ENCODE measurements at regions of chr3 and their contacts with region 1.

Region 1: GRCh38 chr3:143674100-143674968 is 173.9 kb downstream of the SLC9A9 start:
- DNase-seq: peak; percentile 80
- H3K4me3 ChIP-seq: no peak overlapping the region
- H3K27ac ChIP-seq: no peak overlapping the region
- H3K4me1 ChIP-seq: no peaks in the 10 kb centered on the region
- H3K27me3 ChIP-seq: peaks cover 0 to under 1% of the 10 kb centered on the region in 2 experiments
- CTCF ChIP-seq: peak; percentile 76 to 84
- POLR2A ChIP-seq: no peak

Region 2: GRCh38 chr3:143016321-143016972 is 657.9 kb before region 1 on chr3:
- CTCF ChIA-PET with region 1: interaction called, 11 read pairs
- POLR2A ChIA-PET with region 1: no interaction called
- dilution Hi-C with region 1: no loop called
- intact Hi-C with region 1: no loop called
- DNase-seq: peak; percentile 48
- H3K4me3 ChIP-seq: no peak overlapping the region
- H3K27ac ChIP-seq: no peak overlapping the region
- H3K4me1 ChIP-seq: no peaks in the 10 kb centered on the region
- H3K27me3 ChIP-seq: no peaks in the 10 kb centered on the region
- CTCF ChIP-seq: peak; percentile 28 to 41
- POLR2A ChIP-seq: no peak

Region 3: DNA sequence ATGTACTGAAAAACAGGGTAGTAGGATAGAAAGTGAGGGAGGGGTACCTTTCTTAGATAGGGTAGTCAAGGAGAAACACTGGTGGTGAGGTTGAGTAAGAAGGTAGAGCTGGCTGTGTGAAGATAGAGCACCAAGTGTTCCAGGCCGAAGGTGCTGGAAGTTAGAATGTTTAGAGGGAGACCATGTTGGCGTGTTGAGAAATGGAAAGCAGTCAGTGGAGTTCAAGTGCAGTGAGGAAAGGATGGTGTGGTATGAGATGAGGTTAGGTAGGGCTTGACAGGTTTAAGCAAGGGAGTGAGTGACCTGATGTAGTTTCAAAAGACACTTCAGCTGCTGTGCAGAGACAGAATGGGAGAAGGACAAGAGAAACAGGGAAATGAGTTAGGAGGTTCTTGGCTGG is 609.0 kb before region 1 on chr3:
- CTCF ChIA-PET with region 1: no interaction called
- POLR2A ChIA-PET with region 1: no interaction called
- dilution Hi-C with region 1: no loop called
- intact Hi-C with region 1: no loop called
- DNase-seq: no peak
- H3K4me3 ChIP-seq: no peak overlapping the region
- H3K27ac ChIP-seq: no peak overlapping the region
- H3K4me1 ChIP-seq: peaks cover 4% of the 10 kb centered on the region
- H3K27me3 ChIP-seq: no peaks in the 10 kb centered on the region
- CTCF ChIP-seq: no peak
- POLR2A ChIP-seq: no peak

Region 4: DNA sequence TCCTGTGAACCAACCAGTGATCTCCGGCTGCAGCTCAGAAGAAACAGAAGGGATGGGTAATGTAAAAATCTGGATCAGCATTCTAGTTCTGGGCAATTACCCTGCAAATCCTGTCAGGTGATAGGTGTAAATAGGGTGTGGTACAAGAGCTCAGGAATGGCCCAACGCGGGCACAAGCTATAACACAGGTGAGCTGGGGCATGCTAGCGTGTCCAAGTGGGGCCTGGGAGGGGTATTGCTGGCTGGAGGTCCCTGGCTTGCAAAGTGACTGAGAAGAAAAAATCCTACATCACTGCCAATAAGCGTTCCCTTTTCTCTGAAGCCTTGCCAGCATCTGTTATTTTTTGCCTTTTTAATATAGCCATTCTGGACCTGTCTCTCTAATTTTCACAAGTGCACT is 564.5 kb before region 1 on chr3:
- CTCF ChIA-PET with region 1: interaction called, 16 read pairs
- POLR2A ChIA-PET with region 1: no interaction called
- dilution Hi-C with region 1: no loop called
- intact Hi-C with region 1: no loop called
- DNase-seq: no peak
- H3K4me3 ChIP-seq: no peak overlapping the region
- H3K27ac ChIP-seq: no peak overlapping the region
- H3K4me1 ChIP-seq: no peaks in the 10 kb centered on the region
- H3K27me3 ChIP-seq: peaks cover 3 to 6% of the 10 kb centered on the region in 2 experiments
- CTCF ChIP-seq: no peak
- POLR2A ChIP-seq: no peak

Region 5: GRCh38 chr3:143135150-143135549 is 539.2 kb before region 1 on chr3:
- CTCF ChIA-PET with region 1: interaction called, 19 read pairs
- POLR2A ChIA-PET with region 1: no interaction called
- dilution Hi-C with region 1: no loop called
- intact Hi-C with region 1: no loop called
- DNase-seq: peak; percentile 81
- H3K4me3 ChIP-seq: no peak overlapping the region
- H3K27ac ChIP-seq: peak overlapping the region; percentile 19
- H3K4me1 ChIP-seq: peaks cover 26% of the 10 kb centered on the region
- H3K27me3 ChIP-seq: no peaks in the 10 kb centered on the region
- CTCF ChIP-seq: no peak
- POLR2A ChIP-seq: peak; percentile 56

Region 6: DNA sequence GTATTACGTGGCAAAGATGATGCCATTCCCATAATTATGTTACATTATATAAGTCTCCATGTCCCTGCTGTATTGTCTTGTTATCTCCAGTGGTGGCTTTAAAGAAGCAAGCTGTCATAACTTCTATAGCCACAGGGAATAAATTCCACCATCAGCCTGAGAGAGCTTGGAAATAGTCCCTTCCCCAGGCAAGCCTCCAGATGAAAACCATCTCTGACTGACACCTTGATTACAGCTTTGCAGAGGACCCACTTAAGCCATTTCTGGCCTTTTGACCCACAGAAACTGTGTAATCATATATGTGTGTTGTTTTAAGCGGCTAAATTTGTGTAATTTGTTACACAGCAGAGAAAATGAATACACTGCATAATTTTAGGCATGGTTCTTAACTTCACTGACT is 442.2 kb before region 1 on chr3:
- CTCF ChIA-PET with region 1: no interaction called
- POLR2A ChIA-PET with region 1: no interaction called
- dilution Hi-C with region 1: no loop called
- intact Hi-C with region 1: no loop called
- DNase-seq: no peak
- H3K4me3 ChIP-seq: no peak overlapping the region
- H3K27ac ChIP-seq: no peak overlapping the region
- H3K4me1 ChIP-seq: no peaks in the 10 kb centered on the region
- H3K27me3 ChIP-seq: no peaks in the 10 kb centered on the region
- CTCF ChIP-seq: no peak
- POLR2A ChIP-seq: no peak

Region 7: DNA sequence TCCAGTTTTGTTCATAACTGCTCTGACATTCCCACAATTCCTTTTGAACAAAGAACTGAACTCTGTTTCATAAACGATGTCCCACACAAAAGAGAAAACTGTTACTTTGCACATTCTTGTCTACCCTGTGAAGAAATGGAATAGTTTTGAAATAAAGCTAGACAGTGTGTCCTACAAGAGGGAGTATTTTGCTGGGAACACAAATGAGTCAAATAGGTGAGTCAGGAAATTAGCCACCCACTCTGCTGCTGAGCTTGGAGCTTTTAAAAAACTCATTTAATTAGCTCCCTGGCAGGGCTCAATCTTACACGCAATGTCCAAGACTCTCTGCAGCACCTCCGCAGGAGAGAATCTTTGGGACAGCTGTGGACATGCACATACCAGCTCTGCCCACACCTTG is 19.4 kb before region 1 on chr3:
- CTCF ChIA-PET with region 1: interaction called, 38 read pairs
- POLR2A ChIA-PET with region 1: no interaction called
- dilution Hi-C with region 1: no loop called
- intact Hi-C with region 1: no loop called
- DNase-seq: no peak
- H3K4me3 ChIP-seq: no peak overlapping the region
- H3K27ac ChIP-seq: no peak overlapping the region
- H3K4me1 ChIP-seq: no peaks in the 10 kb centered on the region
- H3K27me3 ChIP-seq: no peaks in the 10 kb centered on the region
- CTCF ChIP-seq: no peak
- POLR2A ChIP-seq: no peak

Region 8: GRCh38 chr3:143693506-143693905 is 19.2 kb after region 1 on chr3:
- CTCF ChIA-PET with region 1: interaction called, 16 read pairs
- POLR2A ChIA-PET with region 1: no interaction called
- dilution Hi-C with region 1: no loop called
- intact Hi-C with region 1: no loop called
- DNase-seq: no peak
- H3K4me3 ChIP-seq: no peak overlapping the region
- H3K27ac ChIP-seq: no peak overlapping the region
- H3K4me1 ChIP-seq: no peaks in the 10 kb centered on the region
- H3K27me3 ChIP-seq: no peaks in the 10 kb centered on the region
- CTCF ChIP-seq: no peak
- POLR2A ChIP-seq: no peak